ENCODE measurements at regions of chr2 and their contacts with region 1.

Region 1: DNA sequence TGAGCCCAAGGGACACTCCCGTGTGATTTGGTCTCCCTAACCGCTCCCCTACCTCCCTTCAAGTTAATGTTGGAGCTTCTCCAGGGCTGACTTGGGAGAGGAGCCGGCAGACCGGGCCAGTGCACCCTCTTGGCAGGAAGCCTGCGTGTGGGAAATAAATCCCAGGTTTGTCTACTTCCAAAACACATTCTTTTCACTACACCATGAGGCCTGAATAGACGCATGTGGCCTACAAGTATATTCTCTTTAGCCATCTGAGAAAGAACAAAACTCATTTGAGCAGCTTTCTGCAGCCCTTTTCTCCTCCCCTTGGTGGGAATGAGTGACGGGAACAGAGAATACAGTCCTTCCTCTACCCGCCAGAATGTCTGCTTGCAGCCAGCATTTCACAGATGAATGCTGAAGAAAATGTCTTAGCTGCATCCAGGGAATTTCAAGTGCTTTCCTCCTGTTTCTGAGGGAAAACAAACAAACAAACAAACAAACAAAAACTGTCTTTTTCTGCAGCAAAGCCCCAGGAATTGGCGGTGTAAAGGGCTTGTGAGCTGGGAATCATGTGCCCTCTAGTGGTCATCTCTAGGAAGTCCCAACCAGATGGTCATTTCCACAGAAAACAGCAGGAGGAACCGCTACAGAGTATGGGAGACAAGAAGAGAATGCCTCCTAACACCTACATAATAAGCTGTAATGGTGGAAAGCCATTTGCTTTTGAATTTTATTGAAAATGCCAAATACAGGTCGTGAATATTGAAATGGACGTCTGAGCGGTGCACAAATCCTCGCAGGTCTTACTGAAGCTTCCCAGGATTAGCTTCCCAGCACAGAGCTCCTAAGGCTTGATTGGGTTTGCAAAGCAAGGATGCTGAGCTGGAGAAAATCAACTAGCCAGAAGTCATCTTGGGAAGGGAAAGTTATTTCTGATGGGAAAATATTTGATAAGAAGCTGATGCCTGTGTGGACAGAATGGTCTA is 41.2 kb upstream of the DAPL1 start:
- DNase-seq: no peak
- ATAC-seq: peak; percentile 83 to 95 (median 84)
- H3K4me3 ChIP-seq: peak overlapping the region; percentile 57
- H3K27ac ChIP-seq: no peak overlapping the region
- H3K4me1 ChIP-seq: no peaks in the 10 kb centered on the region
- H3K27me3 ChIP-seq: no peaks in the 10 kb centered on the region
- CTCF ChIP-seq: peak; percentile 90

Region 2: DNA sequence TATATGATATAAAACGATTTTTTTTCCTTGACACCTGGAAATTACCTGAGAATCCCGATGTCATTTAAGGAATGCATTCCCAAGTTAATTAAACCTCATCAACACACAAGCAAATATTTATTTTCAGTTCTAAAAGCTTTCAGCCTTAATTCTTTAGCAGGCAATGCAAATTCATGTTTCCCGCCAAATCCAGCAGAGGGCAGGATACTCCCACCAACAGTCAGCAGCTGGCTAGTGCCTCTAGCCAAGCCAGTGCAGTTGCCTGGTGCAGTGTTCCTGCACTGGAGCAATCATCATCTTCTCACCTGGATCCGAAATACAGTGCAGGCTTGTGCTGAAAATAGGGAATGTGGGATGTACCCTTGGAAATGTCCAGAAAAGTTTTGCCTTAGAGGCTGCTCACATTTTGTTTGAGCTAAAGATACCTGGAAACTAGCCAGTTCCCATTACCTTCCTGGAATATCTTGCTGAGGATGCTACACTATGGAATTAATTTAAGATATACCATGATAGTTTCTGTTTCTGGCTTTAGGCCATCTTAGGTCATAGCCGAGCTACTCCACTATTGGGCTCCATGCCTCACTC is 1261.6 kb before region 1 on chr2:
- intact Hi-C with region 1: loop called in 1 of 2 experiments (anchors 5 kb)
- DNase-seq: peak; percentile 44 to 69
- ATAC-seq: peak; percentile 71 to 91 (median 84)
- H3K4me3 ChIP-seq: no peak overlapping the region
- H3K27ac ChIP-seq: no peak overlapping the region
- H3K4me1 ChIP-seq: no peaks in the 10 kb centered on the region
- H3K27me3 ChIP-seq: no peaks in the 10 kb centered on the region
- CTCF ChIP-seq: peak; percentile 64

Region 3: DNA sequence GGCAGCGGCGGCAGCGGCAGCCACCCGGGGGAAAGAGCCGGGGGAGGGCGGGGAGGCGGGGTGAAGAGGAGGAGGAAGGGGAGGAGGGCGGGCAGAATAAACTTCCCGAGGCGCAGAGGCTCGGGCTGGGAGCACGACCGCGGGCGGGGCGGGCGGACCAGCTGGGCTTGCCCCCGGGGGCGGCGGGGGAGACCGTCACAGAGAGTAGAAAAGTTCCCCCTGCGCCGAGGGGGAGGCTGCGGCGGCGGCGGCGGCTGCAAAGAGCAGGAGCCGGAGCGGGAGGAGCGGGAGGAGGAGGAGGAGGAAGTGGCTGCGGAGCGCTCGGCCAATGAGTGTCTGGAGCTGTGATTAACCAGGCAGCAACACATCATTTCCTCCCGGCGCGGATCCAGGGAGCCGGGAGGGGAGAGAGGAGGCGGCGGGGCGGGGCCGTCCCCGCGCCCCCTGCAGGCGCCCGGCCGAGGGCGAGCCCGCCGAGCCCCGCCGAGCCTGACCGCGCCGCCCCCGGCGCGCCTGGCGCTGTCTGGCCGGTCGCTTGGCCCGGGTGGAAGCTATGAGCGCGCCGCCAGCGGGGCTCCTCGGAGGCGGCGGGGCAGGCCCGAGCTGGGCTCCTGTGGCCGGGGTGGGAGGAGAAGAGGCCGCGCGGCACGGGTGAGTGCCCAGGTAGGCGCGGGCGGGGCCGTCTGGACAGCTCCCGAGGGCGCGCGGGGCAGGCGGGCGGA is 877.7 kb before region 1 on chr2 and contains the start of gene ACVR1:
- intact Hi-C with region 1: loop called in 1 of 2 experiments (anchors 10 kb)
- DNase-seq: peak; percentile 97 to 98
- ATAC-seq: peak; percentile 92 to 96 (median 95)
- H3K4me3 ChIP-seq: peak within 1 kb of the TSS; percentile 88
- H3K27ac ChIP-seq: peak within 1 kb of the TSS; percentile 97
- H3K4me1 ChIP-seq: peaks cover 44% of the 10 kb centered on the region
- H3K27me3 ChIP-seq: no peaks in the 10 kb centered on the region
- CTCF ChIP-seq: peak; percentile 64
- total RNA-seq, gene ACVR1: 23.6 to 28.0 (median 25.4) TPM

Region 4: DNA sequence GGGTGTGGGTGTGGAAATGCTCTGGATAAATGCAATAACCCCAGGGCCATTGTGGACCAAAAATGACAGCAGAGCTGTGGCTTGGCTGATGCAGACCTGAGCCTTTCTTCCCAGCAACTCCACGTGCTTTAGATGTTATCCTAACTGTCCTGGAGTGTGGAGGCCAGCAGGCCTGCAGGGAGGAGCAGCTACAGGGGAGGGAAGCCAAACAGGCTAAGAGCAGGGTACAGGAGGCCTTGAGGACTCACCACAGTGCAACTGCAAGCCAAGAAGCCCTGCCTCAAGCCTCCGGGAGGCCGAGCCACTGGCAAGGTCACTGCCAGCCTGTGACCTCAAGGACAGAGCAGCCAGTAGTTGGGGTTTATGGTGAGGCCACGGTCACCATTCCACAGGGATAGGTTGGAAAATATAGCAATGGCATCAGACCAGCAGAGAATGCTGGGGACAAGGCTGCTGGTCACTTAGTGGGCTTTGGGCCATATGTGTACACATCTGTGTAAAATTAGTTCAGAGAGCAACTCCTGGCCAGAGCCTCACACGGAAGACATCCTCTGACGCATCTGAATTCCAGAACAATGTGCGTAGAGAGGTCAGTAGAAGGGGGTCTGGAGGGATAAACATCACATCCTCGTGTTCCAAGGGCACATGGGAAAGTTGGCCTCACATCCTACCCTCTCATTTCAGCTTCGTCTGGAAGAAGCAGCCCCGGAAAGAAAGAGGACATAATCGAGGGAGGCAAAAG is 728.5 kb before region 1 on chr2:
- intact Hi-C with region 1: loop called (anchors 5 kb)
- DNase-seq: no peak
- ATAC-seq: no peak
- H3K4me3 ChIP-seq: no peak overlapping the region
- H3K27ac ChIP-seq: no peak overlapping the region
- H3K4me1 ChIP-seq: no peaks in the 10 kb centered on the region
- H3K27me3 ChIP-seq: no peaks in the 10 kb centered on the region
- CTCF ChIP-seq: no peak

Region 5: GRCh38 chr2:158179660-158180059 is 574.3 kb before region 1 on chr2:
- intact Hi-C with region 1: loop called (anchors 10 kb)
- DNase-seq: no peak
- ATAC-seq: no peak
- H3K4me3 ChIP-seq: no peak overlapping the region
- H3K27ac ChIP-seq: no peak overlapping the region
- H3K4me1 ChIP-seq: no peaks in the 10 kb centered on the region
- H3K27me3 ChIP-seq: no peaks in the 10 kb centered on the region
- CTCF ChIP-seq: peak; percentile 25

Region 6: DNA sequence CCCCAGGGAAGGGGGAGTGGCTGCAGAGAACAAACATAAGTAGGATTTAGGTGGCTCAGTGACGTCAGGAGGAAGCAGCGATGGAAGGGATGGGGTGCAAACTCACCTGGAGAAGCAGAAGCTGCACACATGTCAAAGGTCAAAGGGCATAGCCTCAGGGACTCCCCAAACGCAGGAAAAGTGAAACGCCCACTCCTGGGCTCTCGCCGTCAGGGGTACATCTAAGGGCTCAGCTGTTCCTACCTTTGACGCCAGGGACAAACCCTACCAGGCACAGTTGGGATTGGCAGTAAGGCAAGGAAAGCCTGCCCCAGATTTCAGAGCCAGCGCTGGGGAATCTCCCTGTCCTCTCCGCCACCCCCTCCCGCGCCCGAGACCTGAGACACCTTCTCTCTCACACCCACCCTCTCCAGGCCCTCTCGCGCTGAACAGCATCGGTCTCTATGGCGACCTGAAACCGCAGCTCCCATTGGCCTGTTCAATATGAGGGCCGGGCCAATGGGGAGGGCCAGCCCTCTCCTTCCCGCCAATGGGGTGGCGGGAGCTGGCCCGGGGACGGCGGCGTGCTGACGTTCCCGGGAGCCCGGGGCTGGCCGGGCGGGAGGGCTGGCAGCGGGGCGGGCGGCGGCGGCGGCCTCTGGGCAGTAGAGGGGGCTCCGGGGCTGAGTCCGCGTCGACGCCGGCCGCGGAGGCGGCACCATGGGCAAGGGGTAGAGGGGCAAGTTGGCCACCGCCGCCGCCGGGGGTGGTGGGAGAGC is 297.4 kb before region 1 on chr2 and contains the starts of genes CCDC148 and PKP4:
- intact Hi-C with region 1: loop called (anchors 5 to 10 kb)
- DNase-seq: peak; percentile 88 to 91
- ATAC-seq: peak; percentile 93 to 98 (median 96)
- H3K4me3 ChIP-seq: peak within 1 kb of the TSS; percentile 85
- H3K27ac ChIP-seq: peak within 1 kb of the TSS; percentile 91
- H3K4me1 ChIP-seq: peaks cover 22% of the 10 kb centered on the region
- H3K27me3 ChIP-seq: no peaks in the 10 kb centered on the region
- CTCF ChIP-seq: no peak
- total RNA-seq, gene CCDC148: not detected
- total RNA-seq, gene PKP4: 18.0 to 23.8 (median 21.0) TPM

Region 7: GRCh38 chr2:158610059-158610458 is 143.9 kb before region 1 on chr2:
- intact Hi-C with region 1: no loop called
- DNase-seq: no peak
- ATAC-seq: no peak
- H3K4me3 ChIP-seq: no peak overlapping the region
- H3K27ac ChIP-seq: no peak overlapping the region
- H3K4me1 ChIP-seq: no peaks in the 10 kb centered on the region
- H3K27me3 ChIP-seq: no peaks in the 10 kb centered on the region
- CTCF ChIP-seq: no peak

Region 8: DNA sequence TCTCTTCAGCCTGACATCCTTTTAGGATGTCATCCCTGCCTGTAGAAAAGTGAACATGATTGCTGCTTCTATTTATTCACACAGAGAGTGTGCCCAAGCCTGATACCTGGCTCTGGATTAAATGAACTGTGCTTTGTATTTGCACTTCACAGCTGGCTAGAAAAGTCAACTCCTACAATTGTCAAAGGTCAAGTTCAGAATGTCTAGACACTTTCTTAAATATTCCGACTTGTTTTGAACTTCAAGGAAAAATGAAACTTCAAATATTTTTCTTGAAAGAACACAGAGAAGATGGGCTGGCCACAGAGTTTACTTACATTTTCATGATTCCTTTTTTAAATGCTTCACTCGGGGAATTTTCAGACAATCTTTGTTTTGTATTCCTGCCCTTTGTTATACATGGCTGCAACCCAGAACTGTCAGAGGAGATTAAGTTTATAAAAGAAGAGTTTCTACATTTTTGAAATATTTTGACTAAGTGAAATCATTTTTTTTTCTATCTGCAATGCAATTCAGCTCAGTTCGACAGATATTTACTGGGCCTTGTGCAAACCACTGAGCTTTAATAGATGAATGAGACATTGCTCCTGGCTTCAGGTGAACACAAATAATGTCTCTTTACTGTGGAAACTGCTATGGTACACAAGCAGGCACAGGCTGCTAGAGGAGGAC is 74.7 kb after region 1 on chr2:
- intact Hi-C with region 1: no loop called
- DNase-seq: no peak
- ATAC-seq: no peak
- H3K4me3 ChIP-seq: no peak overlapping the region
- H3K27ac ChIP-seq: no peak overlapping the region
- H3K4me1 ChIP-seq: no peaks in the 10 kb centered on the region
- H3K27me3 ChIP-seq: no peaks in the 10 kb centered on the region
- CTCF ChIP-seq: no peak

Measured in psoas muscle (tissue), 8 donors.